Naive thymus-derived CD8-positive, alpha-beta T cell (primary cell): ENCODE measurements at regions of chr14 and their contacts with region 1.

Region 1: GRCh38 chr14:49892636-49893308 is at the start of gene ARF6:
- DNase-seq: peak; percentile 88 to 98 (median 90)
- ATAC-seq: peak; percentile 78 to 82
- H3K4me3 Mint-ChIP-seq: peak within 1 kb of the TSS; percentile 92 to 100 (median 98)
- H3K27ac Mint-ChIP-seq: peak within 1 kb of the TSS; percentile 98 to 100 (median 99)
- H3K4me1 Mint-ChIP-seq: peaks cover 22 to 44% (median 36%) of the 10 kb centered on the region in 4 donors
- H3K27me3 Mint-ChIP-seq: peaks cover 0 to 1% (median 0%) of the 10 kb centered on the region in 5 donors
- polyA plus RNA-seq, gene ARF6: 74.6 to 100 (median 97.6) TPM

Region 2: GRCh38 chr14:49879683-49880204 is 13.0 kb before region 1 on chr14:
- POLR2A ChIA-PET with region 1: interaction called, 11 read pairs
- DNase-seq: peak in 8 of 10 donors; percentile 18 to 77 (median 50)
- ATAC-seq: peak; percentile 87 to 94
- H3K4me3 Mint-ChIP-seq: no peak overlapping the region
- H3K27ac Mint-ChIP-seq: peak overlapping the region in 7 of 10 donors; percentile 35 to 81 (median 51)
- H3K4me1 Mint-ChIP-seq: peaks cover 0 to 18% (median 13%) of the 10 kb centered on the region in 4 donors
- H3K27me3 Mint-ChIP-seq: no peaks in the 10 kb centered on the region

Region 3: GRCh38 chr14:49946320-49947141 is 53.8 kb after region 1 on chr14:
- POLR2A ChIA-PET with region 1: interaction called, 25 read pairs
- DNase-seq: peak in 6 of 10 donors; percentile 9 to 64 (median 26)
- ATAC-seq: peak; percentile 75 to 76
- H3K4me3 Mint-ChIP-seq: peak overlapping the region; percentile 6 to 82 (median 70)
- H3K27ac Mint-ChIP-seq: peak overlapping the region; percentile 87 to 99 (median 92)
- H3K4me1 Mint-ChIP-seq: peaks cover 42 to 77% (median 70%) of the 10 kb centered on the region in 4 donors
- H3K27me3 Mint-ChIP-seq: no peaks in the 10 kb centered on the region

Region 4: DNA sequence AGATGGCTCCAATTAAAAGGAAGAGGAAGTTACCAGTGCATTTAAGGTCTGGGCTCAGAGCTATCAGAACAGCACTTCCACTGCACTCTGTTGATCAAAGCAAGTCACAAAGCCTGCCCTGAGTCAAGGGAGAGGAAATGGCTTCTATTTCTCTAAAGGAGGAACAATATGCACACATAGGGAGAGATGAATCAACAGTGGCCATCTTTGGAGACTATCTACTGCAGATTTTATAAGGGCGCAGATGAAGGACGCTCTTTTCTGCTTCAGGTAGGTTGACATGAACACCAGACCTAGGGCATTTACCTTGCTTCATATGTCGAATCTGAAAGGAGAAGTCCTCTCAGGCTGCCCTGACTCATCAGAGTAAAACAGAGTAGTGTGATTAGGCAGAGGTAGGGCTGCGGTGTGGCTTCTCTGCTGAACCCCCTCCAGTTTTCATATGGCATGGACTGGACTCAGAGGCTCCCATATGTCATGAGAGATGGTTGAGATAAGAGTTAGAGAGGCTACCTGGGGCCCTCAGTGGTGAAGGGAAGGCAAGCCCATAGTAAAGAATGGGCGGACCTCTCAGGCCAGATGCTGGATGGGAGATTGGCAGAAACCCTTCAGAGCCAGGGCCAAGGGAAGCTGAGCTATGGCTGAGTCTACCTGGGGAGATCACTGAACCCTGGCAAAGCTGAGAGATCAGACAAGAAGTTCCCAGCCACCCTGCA is 84.5 kb after region 1 on chr14:
- POLR2A ChIA-PET with region 1: interaction called, 60 read pairs
- DNase-seq: peak in 6 of 10 donors; percentile 22 to 77 (median 51)
- ATAC-seq: peak; percentile 83 to 94
- H3K4me3 Mint-ChIP-seq: peak overlapping the region; percentile 55 to 85 (median 76)
- H3K27ac Mint-ChIP-seq: peak overlapping the region; percentile 90 to 98 (median 95)
- H3K4me1 Mint-ChIP-seq: peaks cover 48 to 95% (median 81%) of the 10 kb centered on the region in 4 donors
- H3K27me3 Mint-ChIP-seq: no peaks in the 10 kb centered on the region

Region 5: GRCh38 chr14:50085570-50086320 is 193.0 kb after region 1 on chr14:
- POLR2A ChIA-PET with region 1: interaction called, 17 read pairs
- DNase-seq: peak in 3 of 10 donors; percentile 26 to 49 (median 37)
- ATAC-seq: no peak
- H3K4me3 Mint-ChIP-seq: peak overlapping the region; percentile 15 to 82 (median 68)
- H3K27ac Mint-ChIP-seq: peak overlapping the region; percentile 79 to 97 (median 93)
- H3K4me1 Mint-ChIP-seq: peaks cover 39 to 94% (median 88%) of the 10 kb centered on the region in 4 donors
- H3K27me3 Mint-ChIP-seq: no peaks in the 10 kb centered on the region